ENCODE measurements at regions of chr2 and their contacts with region 1.

Region 1: GRCh38 chr2:173210270-173211196 is 134.9 kb downstream of the MAP3K20 start:
- DNase-seq: peak; percentile 70
- H3K4me3 ChIP-seq: no peak overlapping the region
- H3K27ac ChIP-seq: peak overlapping the region in 1 of 2 experiments; percentile 58; a peak in 2 of 4 replicates
- H3K4me1 ChIP-seq: peaks cover 0 to 5% of the 10 kb centered on the region in 2 experiments; a peak in 1 of 4 replicates
- H3K27me3 ChIP-seq: no peaks in the 10 kb centered on the region
- CTCF ChIP-seq: peak; percentile 98
- EP300 ChIP-seq: 0 out of 4 replicates have a peak, but pooled peaks have one; percentile 6 to 19
- RAD21 ChIP-seq: peak; percentile 94

Region 2: GRCh38 chr2:172806493-172806892 is 404.0 kb before region 1 on chr2:
- CTCF ChIA-PET with region 1: interaction called, 24 read pairs
- POLR2A ChIA-PET with region 1: no interaction called
- DNase-seq: peak; percentile 50
- H3K4me3 ChIP-seq: peak overlapping the region in 1 of 2 experiments; percentile 46; a peak in 1 of 4 replicates
- H3K27ac ChIP-seq: peak overlapping the region in 1 of 2 experiments; percentile 53; a peak in 2 of 4 replicates
- H3K4me1 ChIP-seq: peaks cover 0 to 20% of the 10 kb centered on the region in 2 experiments; a peak in 2 of 4 replicates
- H3K27me3 ChIP-seq: no peaks in the 10 kb centered on the region
- CTCF ChIP-seq: peak; percentile 95
- EP300 ChIP-seq: no peak
- RAD21 ChIP-seq: peak; percentile 99

Region 3: GRCh38 chr2:172836386-172836821 is 374.1 kb before region 1 on chr2:
- CTCF ChIA-PET with region 1: no interaction called
- POLR2A ChIA-PET with region 1: no interaction called
- DNase-seq: no peak
- H3K4me3 ChIP-seq: no peak overlapping the region
- H3K27ac ChIP-seq: peak overlapping the region in 1 of 2 experiments; percentile 36; a peak in 1 of 4 replicates
- H3K4me1 ChIP-seq: peaks cover 0 to 8% of the 10 kb centered on the region in 2 experiments; a peak in 3 of 4 replicates
- H3K27me3 ChIP-seq: no peaks in the 10 kb centered on the region
- CTCF ChIP-seq: no peak
- EP300 ChIP-seq: no peak
- RAD21 ChIP-seq: no peak

Region 4: DNA sequence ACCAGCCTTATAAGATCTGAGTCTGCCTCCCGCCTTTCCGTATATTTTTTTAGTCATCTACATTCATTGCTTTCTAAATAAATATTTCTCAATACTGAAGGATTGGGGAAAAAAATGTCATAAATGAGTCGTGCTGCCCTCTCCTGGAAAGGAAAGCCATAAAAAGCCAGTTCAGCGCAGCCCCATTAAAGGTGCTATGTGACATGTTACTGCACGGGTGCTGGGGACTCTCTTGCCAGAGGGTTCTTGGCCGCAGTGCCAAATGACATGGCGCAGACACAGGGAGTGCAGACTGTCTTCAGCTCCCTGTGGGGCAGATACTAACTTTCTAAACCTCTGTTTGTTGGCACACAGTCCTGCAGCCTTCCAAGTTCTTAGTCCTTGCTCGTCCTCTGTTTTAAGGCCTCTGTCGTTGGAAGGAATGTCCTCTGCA is 188.6 kb before region 1 on chr2:
- CTCF ChIA-PET with region 1: interaction called, 256 read pairs
- POLR2A ChIA-PET with region 1: no interaction called
- DNase-seq: peak; percentile 30
- H3K4me3 ChIP-seq: no peak overlapping the region
- H3K27ac ChIP-seq: no peak overlapping the region
- H3K4me1 ChIP-seq: peaks cover 0 to 2% of the 10 kb centered on the region in 2 experiments; a peak in 1 of 4 replicates
- H3K27me3 ChIP-seq: no peaks in the 10 kb centered on the region
- CTCF ChIP-seq: peak; percentile 54
- EP300 ChIP-seq: no peak
- RAD21 ChIP-seq: peak; percentile 41

Region 5: DNA sequence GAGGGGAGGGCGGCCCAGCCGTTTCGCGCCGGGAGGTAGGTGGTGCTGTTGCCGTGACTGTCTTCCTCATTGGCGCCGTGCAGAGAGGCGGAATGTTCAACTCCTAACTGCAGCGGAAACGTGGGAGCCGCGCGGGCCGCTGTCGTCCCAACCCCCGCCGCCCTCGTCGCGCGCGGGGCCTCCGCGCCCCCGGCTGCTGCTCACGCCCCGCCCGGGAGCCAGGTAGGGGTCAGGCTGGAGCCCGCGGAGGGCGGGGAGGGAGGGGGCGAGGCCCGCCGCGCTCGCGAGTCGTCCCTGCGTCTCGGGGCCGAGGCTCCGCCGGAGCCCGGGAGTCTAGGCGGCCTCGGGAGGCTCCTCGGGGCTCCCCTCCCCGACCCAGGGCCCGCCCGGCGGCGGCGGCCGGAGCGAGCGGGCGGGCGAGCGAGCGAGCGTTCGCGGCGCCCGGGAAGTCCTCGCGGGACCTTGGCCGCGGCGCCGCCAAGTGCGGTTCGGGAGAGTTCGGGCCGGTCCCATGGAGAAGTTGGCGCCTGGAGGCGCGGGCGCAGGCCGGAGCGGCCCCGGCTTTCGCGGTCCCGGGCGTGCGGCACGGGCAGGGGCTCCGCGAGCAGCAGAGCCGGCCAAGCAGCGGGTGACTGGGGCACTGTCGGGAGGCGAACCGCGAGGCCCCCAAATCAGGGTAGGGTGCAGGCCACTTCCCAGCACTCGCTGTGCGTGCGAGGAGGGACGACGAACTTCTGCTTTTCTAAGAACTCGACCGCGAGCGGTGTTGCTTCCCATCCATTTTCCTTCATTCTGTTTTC is 134.6 kb before region 1 on chr2 and contains the start of gene MAP3K20:
- CTCF ChIA-PET with region 1: interaction called, 10 read pairs
- POLR2A ChIA-PET with region 1: no interaction called
- DNase-seq: peak; percentile 86
- H3K4me3 ChIP-seq: peak within 1 kb of the TSS; percentile 85
- H3K27ac ChIP-seq: peak within 1 kb of the TSS; percentile 85 to 88
- H3K4me1 ChIP-seq: peaks cover 3 to 4% of the 10 kb centered on the region in 2 experiments; a peak in 3 of 4 replicates
- H3K27me3 ChIP-seq: no peaks in the 10 kb centered on the region
- CTCF ChIP-seq: peak; percentile 47
- EP300 ChIP-seq: no peak
- RAD21 ChIP-seq: peak; percentile 42
- polyA plus RNA-seq, gene MAP3K20: 8.5 and 12.2 TPM in 2 replicates

Region 6: DNA sequence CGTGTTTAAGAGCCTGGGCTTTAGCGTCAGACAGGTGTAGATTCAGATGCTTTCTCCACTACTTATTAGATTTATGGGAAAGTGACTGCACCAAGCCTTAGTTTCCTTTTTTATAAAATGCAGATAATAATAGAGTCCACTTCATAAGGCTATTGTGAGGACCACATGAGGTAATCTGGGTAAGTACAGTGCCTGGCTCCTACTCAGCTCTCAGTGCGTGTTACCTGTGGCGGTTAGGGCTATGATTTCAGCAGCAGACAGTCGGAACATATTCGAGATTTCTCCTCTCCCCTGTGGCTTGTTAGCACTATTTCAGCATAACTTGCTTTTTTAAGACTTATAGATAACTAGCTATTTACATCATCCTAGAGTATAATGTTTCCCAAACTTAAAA is 102.9 kb before region 1 on chr2:
- CTCF ChIA-PET with region 1: no interaction called
- POLR2A ChIA-PET with region 1: no interaction called
- DNase-seq: no peak
- H3K4me3 ChIP-seq: no peak overlapping the region
- H3K27ac ChIP-seq: no peak overlapping the region
- H3K4me1 ChIP-seq: peaks cover 0 to 13% of the 10 kb centered on the region in 2 experiments; a peak in 2 of 4 replicates
- H3K27me3 ChIP-seq: no peaks in the 10 kb centered on the region
- CTCF ChIP-seq: no peak
- EP300 ChIP-seq: no peak
- RAD21 ChIP-seq: no peak

Region 7: GRCh38 chr2:173124441-173124840 is 86.1 kb before region 1 on chr2:
- CTCF ChIA-PET with region 1: no interaction called
- POLR2A ChIA-PET with region 1: no interaction called
- DNase-seq: no peak
- H3K4me3 ChIP-seq: no peak overlapping the region
- H3K27ac ChIP-seq: peak overlapping the region in 1 of 2 experiments; percentile 27; a peak in 1 of 4 replicates
- H3K4me1 ChIP-seq: peaks cover 0 to 43% of the 10 kb centered on the region in 2 experiments; a peak in 3 of 4 replicates
- H3K27me3 ChIP-seq: no peaks in the 10 kb centered on the region
- CTCF ChIP-seq: no peak
- EP300 ChIP-seq: no peak
- RAD21 ChIP-seq: no peak

Region 8: DNA sequence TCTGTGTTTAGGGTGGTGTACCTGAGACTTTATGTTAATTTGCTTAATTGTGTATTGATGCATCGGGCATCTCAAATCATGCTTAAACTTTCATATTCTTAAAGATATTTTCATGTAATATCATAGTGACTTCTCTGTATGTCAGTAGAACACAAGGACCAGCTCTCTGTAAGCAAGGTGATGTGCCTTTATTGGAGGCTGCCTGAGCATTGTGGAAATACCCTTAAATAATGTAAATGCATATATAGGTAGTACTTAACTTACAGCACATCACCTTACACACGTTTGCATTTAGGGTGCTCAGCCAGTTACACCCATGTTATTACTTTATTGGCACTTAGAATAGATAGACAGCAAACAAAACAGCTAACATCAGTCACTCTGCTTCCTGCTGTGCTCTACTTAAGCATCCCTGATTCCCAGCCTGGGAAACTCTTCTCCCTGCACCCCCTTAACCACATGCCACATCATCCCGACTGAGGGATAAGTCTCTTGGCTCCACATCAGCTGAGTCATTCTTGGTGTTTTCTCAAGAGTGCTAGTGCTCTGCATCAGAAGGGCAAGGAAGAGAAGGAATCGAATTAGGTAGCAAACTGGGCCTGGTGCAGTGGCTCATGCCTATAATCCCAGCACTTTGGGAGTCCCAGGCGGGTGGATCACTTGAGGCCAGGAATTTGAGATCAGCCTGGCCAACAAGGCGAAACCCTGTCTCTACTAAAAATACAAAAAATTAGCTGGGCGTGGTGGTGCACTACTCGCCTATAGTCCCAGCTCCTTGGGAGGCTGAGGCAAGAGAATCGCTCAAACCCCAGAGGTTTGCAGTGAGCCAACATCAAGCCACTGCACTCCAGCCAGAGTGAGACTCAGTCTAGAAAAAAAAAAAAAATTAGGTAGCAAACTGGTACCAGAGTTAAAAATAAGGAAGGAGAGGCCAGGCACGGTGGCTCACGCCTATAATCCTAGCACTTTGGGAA is 26.2 kb before region 1 on chr2:
- CTCF ChIA-PET with region 1: interaction called, 11 read pairs
- POLR2A ChIA-PET with region 1: no interaction called
- DNase-seq: peak; percentile 7
- H3K4me3 ChIP-seq: no peak overlapping the region
- H3K27ac ChIP-seq: peak overlapping the region in 1 of 2 experiments; percentile 95; a peak in 2 of 4 replicates
- H3K4me1 ChIP-seq: peaks cover 0 to 42% of the 10 kb centered on the region in 2 experiments; a peak in 3 of 4 replicates
- H3K27me3 ChIP-seq: no peaks in the 10 kb centered on the region
- CTCF ChIP-seq: no peak
- EP300 ChIP-seq: peak in 1 of 2 experiments; percentile 74; a peak in 2 of 4 replicates
- RAD21 ChIP-seq: no peak

Region 9: DNA sequence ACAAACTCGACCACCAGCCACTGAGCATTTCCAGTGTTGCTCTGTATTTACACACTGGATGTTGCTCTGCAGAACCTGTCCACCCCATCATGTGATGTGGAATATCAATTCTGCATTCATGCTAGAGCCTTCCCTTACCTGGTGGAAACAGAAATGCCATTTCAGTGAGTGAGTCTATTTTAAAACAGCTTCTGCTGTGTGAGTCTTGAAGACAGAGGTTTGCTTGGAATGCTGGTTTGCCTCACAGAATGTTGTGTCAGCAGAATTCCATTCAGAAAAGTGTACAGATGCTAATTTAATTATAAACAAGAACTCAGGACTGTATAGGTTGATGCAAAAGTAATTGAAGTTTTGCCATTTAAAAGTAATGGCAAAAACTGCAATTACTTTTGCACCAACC is 16.6 kb before region 1 on chr2:
- CTCF ChIA-PET with region 1: interaction called, 10 read pairs
- POLR2A ChIA-PET with region 1: interaction called, 3 read pairs
- DNase-seq: no peak
- H3K4me3 ChIP-seq: no peak overlapping the region
- H3K27ac ChIP-seq: no peak overlapping the region
- H3K4me1 ChIP-seq: peaks cover 0 to 12% of the 10 kb centered on the region in 2 experiments
- H3K27me3 ChIP-seq: no peaks in the 10 kb centered on the region
- CTCF ChIP-seq: no peak
- EP300 ChIP-seq: no peak
- RAD21 ChIP-seq: no peak

Region 10: GRCh38 chr2:173221937-173222594 is 11.5 kb after region 1 on chr2:
- CTCF ChIA-PET with region 1: interaction called, 25 read pairs
- POLR2A ChIA-PET with region 1: no interaction called
- DNase-seq: no peak
- H3K4me3 ChIP-seq: no peak overlapping the region
- H3K27ac ChIP-seq: no peak overlapping the region
- H3K4me1 ChIP-seq: peaks cover 5 to 9% of the 10 kb centered on the region in 2 experiments; a peak in 2 of 4 replicates
- H3K27me3 ChIP-seq: no peaks in the 10 kb centered on the region
- CTCF ChIP-seq: no peak
- EP300 ChIP-seq: no peak
- RAD21 ChIP-seq: no peak